Activated CD4-positive, alpha-beta T cell treated with anti-CD3 and anti-CD28 coated beads for 36 hours (primary cell): ENCODE measurements at regions of chr1 and their contacts with region 1.

Region 1: GRCh38 chr1:27603681-27604578 is at the start of gene AHDC1:
- DNase-seq: peak; percentile 96
- ATAC-seq: peak; percentile 77
- H3K4me3 Mint-ChIP-seq: peak within 1 kb of the TSS; percentile 91
- H3K27ac Mint-ChIP-seq: peak within 1 kb of the TSS; percentile 70
- H3K4me1 Mint-ChIP-seq: peaks cover 36% of the 10 kb centered on the region
- H3K27me3 Mint-ChIP-seq: no peaks in the 10 kb centered on the region
- total RNA-seq, gene AHDC1: 10.3 to 12.1 TPM

Region 2: GRCh38 chr1:27300341-27301051 is 303.4 kb before region 1 on chr1:
- CTCF ChIA-PET with region 1: interaction called, 51 read pairs
- POLR2A ChIA-PET with region 1: no interaction called
- intact Hi-C with region 1: loop called (anchors 1 to 2 kb)
- DNase-seq: peak; percentile 86
- ATAC-seq: peak; percentile 92
- H3K4me3 Mint-ChIP-seq: no peak overlapping the region
- H3K27ac Mint-ChIP-seq: no peak overlapping the region
- H3K4me1 Mint-ChIP-seq: no peaks in the 10 kb centered on the region
- H3K27me3 Mint-ChIP-seq: no peaks in the 10 kb centered on the region

Region 3: DNA sequence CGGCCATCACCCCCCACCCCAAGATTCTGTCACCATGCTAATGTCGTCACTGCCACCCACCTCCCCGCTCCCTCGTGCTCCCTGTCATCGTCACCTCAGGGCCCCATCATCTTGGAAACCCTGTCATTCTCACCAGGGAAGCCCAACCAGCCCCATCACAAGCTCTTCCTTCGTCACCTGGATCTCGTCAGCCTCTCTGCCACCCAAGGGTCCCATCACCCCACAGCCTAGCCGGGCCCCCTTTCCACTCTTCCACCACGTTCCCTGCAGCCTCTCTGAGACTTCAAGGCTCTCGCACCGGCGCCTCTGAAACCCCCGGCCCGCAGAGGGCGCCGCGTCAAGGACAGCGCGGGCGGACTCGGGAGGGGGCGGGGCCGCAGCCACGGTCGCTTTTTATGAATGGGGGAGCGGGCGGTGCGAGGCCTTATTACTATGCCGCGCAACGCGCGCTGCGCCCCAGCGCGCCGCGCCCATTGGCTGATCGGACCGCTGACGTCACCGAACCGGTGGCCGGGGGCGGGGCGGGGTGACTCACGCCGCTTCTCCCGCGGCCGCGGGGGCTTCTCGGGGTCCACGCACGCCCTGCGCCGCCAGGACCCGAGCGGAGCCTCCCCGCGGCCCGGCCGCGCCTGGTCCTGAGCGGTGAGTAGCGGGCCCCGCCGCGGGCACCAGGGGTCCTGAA is 211.7 kb before region 1 on chr1 and contains the start of gene GPR3:
- CTCF ChIA-PET with region 1: interaction called, 19 read pairs
- POLR2A ChIA-PET with region 1: no interaction called
- intact Hi-C with region 1: loop called (anchors 1 kb)
- DNase-seq: peak; percentile 97
- ATAC-seq: peak; percentile 91
- H3K4me3 Mint-ChIP-seq: peak within 1 kb of the TSS; percentile 70
- H3K27ac Mint-ChIP-seq: peak within 1 kb of the TSS; percentile 92
- H3K4me1 Mint-ChIP-seq: peaks cover 14% of the 10 kb centered on the region
- H3K27me3 Mint-ChIP-seq: no peaks in the 10 kb centered on the region
- total RNA-seq, gene GPR3: 1.1 to 1.3 TPM

Region 4: DNA sequence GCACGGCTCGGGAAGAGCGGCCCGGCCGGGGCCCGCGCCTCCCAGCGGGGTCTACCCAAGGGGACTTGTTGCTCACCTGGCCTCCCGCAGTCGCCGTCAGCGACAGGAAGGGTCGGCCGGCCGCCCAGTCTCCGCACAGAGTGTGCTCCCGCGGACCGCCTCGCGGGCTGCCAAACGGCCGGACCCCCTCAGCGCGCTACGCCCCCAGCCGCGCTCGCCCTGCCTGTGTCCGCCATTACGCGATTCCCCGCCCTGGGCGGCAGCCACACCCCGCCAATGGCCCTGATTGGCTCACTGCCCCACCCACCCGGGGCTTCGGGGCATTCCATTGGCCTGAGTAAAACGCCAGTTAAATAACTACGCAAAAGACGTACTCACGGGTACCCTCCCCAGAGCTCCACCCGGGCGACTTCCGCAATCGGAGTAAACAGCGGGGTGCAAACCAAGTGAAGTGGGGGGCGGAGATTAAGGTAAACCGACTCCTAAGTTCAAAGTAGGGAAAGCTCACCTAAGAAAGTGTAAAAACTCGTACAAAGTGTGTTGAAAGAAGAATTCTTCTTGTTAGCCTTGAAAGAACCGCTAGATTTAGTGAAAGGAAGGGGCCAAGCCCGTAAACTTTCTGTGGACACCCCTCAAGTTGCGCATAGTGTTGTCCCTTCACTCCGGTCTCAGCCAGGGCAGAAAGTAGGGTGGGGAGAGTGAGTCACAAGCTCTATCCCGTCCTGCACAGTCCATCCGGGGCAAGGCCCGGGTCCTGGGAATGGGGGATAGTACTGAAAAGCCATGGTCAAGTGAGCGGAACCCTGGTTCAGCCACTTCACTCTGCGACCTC is 113.8 kb before region 1 on chr1 and contains the start of gene WASF2:
- CTCF ChIA-PET with region 1: interaction called, 3 read pairs
- POLR2A ChIA-PET with region 1: no interaction called
- intact Hi-C with region 1: loop called (anchors 1 to 2 kb)
- DNase-seq: peak; percentile 98
- ATAC-seq: peak; percentile 96
- H3K4me3 Mint-ChIP-seq: peak within 1 kb of the TSS; percentile 98
- H3K27ac Mint-ChIP-seq: peak within 1 kb of the TSS; percentile 99
- H3K4me1 Mint-ChIP-seq: peaks cover 28% of the 10 kb centered on the region
- H3K27me3 Mint-ChIP-seq: no peaks in the 10 kb centered on the region
- total RNA-seq, gene WASF2: 104 to 132 TPM

Region 5: GRCh38 chr1:27616441-27616840 is 12.5 kb after region 1 on chr1:
- CTCF ChIA-PET with region 1: interaction called, 10 read pairs
- POLR2A ChIA-PET with region 1: no interaction called
- intact Hi-C with region 1: no loop called
- DNase-seq: no peak
- ATAC-seq: no peak
- H3K4me3 Mint-ChIP-seq: no peak overlapping the region
- H3K27ac Mint-ChIP-seq: no peak overlapping the region
- H3K4me1 Mint-ChIP-seq: peaks cover 47% of the 10 kb centered on the region
- H3K27me3 Mint-ChIP-seq: no peaks in the 10 kb centered on the region

Region 6: DNA sequence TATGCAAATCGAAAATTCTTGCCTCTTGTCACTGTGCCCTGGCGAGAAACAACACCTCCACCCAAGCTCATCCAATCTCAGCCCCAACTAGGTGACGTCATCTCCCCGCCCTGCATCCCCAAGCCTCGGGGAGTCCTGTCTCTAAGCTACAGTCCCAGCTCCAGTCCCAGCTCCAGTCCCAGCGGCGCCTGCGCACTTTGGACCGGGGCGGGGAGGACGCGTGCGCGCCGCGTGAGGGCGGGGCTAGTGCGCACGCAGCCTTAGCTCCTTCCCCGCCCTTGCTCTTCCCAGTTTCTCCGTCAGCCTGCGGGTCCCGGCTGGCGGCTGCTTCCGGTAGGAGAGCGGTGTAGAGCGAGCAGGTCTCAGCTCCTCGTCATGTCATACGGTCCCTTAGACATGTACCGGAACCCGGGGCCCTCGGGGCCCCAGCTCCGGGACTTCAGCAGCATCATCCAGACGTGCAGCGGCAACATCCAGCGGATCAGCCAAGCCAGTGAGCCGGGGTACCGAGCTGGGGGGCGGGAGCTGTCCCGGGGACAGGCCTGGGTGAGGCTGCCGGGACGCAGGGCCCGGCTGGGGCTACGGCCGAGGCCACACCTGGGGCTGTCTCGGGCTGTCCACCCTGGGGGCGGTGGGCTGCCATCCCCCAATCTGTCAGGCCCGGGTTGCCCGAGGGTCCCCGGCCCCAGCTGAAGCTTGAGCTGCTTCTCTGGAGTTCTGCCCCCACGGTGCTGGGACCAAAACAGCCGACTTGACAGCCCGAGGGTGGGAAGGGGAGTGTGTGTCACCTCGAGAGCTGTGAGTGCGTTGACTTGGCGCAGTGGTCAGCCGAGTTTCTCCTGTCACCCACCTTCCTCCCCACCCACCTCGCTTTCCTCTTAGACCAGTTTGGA is 169.2 kb after region 1 on chr1 and contains the start of gene STX12:
- CTCF ChIA-PET with region 1: interaction called, 3 read pairs
- POLR2A ChIA-PET with region 1: no interaction called
- intact Hi-C with region 1: loop called in 1 of 2 experiments (anchors 1 kb)
- DNase-seq: peak; percentile 100
- ATAC-seq: peak; percentile 97
- H3K4me3 Mint-ChIP-seq: peak within 1 kb of the TSS; percentile 98
- H3K27ac Mint-ChIP-seq: peak within 1 kb of the TSS; percentile 99
- H3K4me1 Mint-ChIP-seq: peaks cover 31% of the 10 kb centered on the region
- H3K27me3 Mint-ChIP-seq: no peaks in the 10 kb centered on the region
- total RNA-seq, gene STX12: 26.8 to 37.4 TPM